Mammary epithelial cell (primary cell): ENCODE measurements at regions of chr1 and their contacts with region 1.

Region 1: DNA sequence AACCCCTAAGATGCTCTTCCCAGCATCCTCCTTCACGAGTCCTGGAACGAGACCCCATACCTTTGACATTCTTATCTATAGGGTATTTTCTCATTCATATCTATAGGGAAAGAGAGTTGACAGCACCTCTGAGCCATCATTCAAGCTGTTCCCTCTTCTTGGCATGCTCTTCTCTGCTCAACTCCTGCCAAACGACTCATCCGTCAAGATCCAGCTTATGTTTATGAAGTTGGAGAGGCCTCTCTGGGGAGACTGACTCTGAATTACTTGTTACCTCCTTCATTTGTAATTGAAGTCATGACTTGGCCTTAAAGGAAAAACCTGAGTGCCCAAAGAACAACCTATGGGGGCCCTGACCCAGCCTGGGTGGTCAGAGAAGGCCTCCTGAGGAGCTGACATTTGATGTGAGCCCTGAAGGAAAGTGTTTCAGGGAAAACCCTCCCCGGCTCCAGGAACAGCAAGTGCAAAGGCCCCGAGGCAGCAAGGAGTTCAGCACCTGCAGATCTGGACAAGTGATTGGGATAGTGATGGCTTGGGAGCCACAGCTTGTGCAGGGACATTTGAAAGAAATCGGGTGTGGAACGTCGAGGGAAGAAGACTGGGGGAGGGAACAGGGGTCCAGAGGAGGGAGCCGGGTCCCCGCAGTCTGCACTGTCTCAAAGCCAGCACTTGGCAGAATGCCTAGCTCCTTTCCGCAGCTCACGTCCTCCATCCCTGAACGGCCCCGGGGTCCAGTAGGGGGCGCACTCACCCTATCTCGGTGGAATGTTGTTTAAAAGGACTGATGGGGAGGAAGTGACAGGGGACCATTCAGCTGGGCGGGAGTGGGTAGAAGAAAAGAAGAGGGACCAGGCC is 14.0 kb upstream of the CDA start:
- DNase-seq: peak; percentile 51
- H3K4me3 ChIP-seq: no peak overlapping the region
- H3K27ac ChIP-seq: no peak overlapping the region
- H3K4me1 ChIP-seq: peaks cover 15% of the 10 kb centered on the region
- H3K27me3 ChIP-seq: no peaks in the 10 kb centered on the region
- CTCF ChIP-seq: peak; percentile 59 to 83

Region 2: DNA sequence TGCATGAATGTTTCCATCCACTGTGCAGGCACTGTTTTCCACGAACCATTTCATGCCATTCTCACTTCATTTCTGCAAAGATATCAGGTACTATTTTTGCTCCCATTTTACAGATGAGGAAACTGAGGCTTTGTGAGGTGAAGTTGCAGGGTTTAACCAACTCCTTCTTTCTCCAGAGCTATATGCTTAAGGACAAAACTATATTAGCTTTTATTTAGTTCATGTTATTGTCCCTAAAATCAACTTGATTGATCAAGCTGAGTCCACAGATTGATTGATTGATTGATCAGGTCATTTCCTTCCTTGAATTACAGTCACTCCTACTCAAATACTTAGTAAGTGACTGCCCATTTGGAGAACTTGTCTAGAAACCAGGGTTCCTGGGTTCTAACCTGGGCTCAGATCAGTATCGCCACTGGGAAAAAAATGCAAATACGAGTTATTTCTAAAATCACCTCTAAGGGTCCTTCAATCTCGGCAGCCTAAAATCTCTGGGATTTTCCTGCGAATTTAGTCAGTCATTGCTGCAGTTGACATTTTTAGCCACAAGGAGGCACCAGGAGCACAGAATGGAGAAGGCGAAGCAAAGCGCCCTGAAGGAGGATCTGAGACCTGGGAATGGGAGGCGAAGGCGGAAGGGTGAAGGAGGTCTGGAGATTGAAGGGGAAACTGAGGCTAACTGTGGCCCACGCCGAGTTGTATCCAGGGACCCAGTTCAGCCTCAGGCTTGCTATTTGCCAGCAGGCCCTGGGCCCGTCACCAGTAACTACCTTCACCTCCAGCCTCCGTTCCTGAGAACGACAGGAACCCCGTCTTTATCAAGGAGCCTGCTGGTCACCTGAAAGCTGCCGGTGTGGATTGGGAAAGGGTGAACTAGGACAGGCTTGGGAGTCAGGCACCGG is 52.7 kb before region 1 on chr1:
- CTCF ChIA-PET with region 1: no interaction called
- dilution Hi-C with region 1: no loop called
- in situ Hi-C with region 1: no loop called
- intact Hi-C with region 1: loop called (anchors 5 kb)
- DNase-seq: peak; percentile 61
- H3K4me3 ChIP-seq: no peak overlapping the region
- H3K27ac ChIP-seq: no peak overlapping the region
- H3K4me1 ChIP-seq: no peaks in the 10 kb centered on the region
- H3K27me3 ChIP-seq: no peaks in the 10 kb centered on the region
- CTCF ChIP-seq: peak; percentile 94 to 98

Region 3: DNA sequence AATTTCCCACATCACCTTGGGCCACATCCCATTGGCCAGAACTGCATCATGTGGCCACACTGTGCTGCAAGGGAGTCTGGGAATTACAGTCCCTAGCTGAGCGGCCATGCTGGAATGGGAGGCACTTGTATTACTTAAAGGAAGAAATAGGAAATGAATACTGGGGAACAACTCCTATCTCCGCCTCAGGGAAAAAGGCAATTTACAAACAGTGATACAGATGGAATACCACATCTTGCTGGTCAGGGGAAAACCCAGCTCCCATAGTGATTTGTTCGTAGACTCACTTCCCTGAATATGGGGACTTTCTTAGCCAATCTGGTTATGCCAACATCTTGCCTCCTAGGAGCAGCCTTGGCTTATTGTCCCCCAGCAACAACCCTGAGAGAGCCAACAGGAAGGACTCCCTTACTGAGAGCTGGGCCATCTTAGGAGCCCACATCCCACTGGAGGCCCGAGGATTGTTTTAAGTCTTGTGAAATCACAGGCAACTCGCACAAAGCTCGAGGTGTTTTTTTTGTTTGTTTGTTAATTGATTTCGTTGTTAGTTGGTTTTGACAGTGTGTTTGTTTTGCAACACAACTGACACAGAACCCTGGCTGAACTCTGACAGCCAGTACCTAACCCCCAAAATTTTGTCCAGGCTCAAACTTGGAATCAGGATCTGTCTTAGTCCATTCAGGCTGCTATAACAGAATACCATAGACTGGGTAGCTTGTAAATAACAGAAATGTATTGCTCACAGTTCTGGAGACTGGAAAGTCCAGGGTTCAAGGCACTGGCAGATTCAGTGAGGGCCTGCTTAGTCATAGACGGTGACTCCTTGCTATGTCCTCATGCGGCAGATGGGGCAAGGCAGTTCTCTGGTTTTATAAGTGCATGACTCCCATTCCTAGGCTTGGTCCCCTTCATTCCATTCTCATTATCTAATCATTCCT is 28.9 kb after region 1 on chr1:
- CTCF ChIA-PET with region 1: interaction called, 4 read pairs
- dilution Hi-C with region 1: no loop called
- in situ Hi-C with region 1: no loop called
- intact Hi-C with region 1: loop called (anchors 2 kb)
- DNase-seq: peak; percentile 94
- H3K4me3 ChIP-seq: no peak overlapping the region
- H3K27ac ChIP-seq: peak overlapping the region; percentile 96
- H3K4me1 ChIP-seq: peaks cover 57% of the 10 kb centered on the region
- H3K27me3 ChIP-seq: no peaks in the 10 kb centered on the region
- CTCF ChIP-seq: no peak

Region 4: GRCh38 chr1:20633190-20634064 is 58.5 kb after region 1 on chr1 and contains the start of gene PINK1:
- CTCF ChIA-PET with region 1: interaction called, 50 read pairs
- dilution Hi-C with region 1: loop called (anchors 5 kb)
- in situ Hi-C with region 1: loop called (anchors 5 kb)
- intact Hi-C with region 1: loop called (anchors 1 kb)
- DNase-seq: peak; percentile 74
- H3K4me3 ChIP-seq: peak within 1 kb of the TSS; percentile 32 to 80 (median 58)
- H3K27ac ChIP-seq: peak within 1 kb of the TSS; percentile 69
- H3K4me1 ChIP-seq: peaks cover 10% of the 10 kb centered on the region
- H3K27me3 ChIP-seq: no peaks in the 10 kb centered on the region
- CTCF ChIP-seq: peak; percentile 94 to 95
- total RNA-seq, gene PINK1: 57.2 to 90.0 TPM

Region 5: DNA sequence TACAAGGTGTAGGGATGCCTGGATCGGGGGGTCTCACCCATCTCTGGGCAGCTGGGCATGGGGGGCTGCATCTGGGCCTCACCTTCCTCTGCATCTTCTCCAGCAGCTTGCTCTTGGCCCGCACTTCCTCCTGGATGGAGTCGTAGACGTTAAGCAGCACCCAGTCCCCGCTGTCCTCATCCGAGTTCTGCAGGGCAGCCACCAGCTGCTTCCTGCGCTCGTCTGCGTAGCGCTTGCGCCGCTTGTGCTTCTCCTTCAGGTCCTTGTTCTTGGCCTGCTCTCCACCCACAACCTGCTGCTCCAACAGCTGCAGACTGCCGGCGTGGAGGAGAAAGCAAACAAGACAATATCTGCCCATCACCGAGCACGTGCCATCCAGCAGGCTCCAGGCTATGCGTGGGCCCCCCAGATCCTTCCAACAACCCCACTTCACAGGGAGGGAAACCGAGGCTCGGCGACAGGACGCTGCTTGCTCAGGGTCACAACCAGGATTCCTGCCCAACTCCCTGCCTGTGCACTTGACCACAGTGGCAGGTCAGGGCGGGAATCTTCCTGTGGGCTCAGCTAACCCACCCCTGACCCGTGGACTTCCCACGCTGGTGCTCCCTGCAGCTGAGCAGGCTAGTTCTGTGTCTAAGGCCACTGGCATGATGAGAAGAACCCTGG is 107.8 kb after region 1 on chr1:
- CTCF ChIA-PET with region 1: interaction called, 37 read pairs
- dilution Hi-C with region 1: no loop called
- in situ Hi-C with region 1: no loop called
- intact Hi-C with region 1: no loop called
- DNase-seq: no peak
- H3K4me3 ChIP-seq: no peak overlapping the region
- H3K27ac ChIP-seq: no peak overlapping the region
- H3K4me1 ChIP-seq: no peaks in the 10 kb centered on the region
- H3K27me3 ChIP-seq: no peaks in the 10 kb centered on the region
- CTCF ChIP-seq: no peak

Region 6: GRCh38 chr1:21106709-21107108 is 531.8 kb after region 1 on chr1:
- CTCF ChIA-PET with region 1: no interaction called
- dilution Hi-C with region 1: no loop called
- in situ Hi-C with region 1: no loop called
- intact Hi-C with region 1: no loop called
- DNase-seq: no peak
- H3K4me3 ChIP-seq: no peak overlapping the region
- H3K27ac ChIP-seq: no peak overlapping the region
- H3K4me1 ChIP-seq: no peaks in the 10 kb centered on the region
- H3K27me3 ChIP-seq: no peaks in the 10 kb centered on the region
- CTCF ChIP-seq: no peak